ENCODE measurements at regions of chr13 and their contacts with region 1.

Region 1: GRCh38 chr13:29384466-29384865 is 211.0 kb downstream of the SLC7A1 start:
- DNase-seq: no peak

Region 2: DNA sequence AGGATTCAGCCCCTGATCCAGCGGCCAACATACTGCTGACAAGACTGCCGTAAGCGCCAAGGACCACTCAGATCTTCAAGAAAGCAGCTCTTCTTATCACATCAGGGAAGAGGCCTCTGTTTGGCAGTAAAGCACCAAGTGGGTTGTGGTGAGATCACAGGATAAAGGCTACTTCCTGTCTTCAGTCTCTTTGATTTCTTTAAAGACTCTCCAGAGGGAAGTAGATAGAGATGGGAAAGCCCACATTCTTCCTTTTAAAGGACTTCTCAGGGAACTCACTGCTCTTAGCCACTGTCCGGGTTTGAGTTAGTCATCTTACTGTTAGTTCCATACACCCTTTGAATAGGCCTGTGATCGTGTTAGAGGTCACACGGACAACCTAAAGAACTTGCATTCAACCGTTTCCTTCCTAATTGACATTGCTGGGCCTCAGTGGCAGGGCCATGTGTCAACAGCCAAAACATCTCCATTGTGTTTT is 772.8 kb before region 1 on chr13:
- intact Hi-C with region 1: no loop called
- DNase-seq: no peak

Region 3: DNA sequence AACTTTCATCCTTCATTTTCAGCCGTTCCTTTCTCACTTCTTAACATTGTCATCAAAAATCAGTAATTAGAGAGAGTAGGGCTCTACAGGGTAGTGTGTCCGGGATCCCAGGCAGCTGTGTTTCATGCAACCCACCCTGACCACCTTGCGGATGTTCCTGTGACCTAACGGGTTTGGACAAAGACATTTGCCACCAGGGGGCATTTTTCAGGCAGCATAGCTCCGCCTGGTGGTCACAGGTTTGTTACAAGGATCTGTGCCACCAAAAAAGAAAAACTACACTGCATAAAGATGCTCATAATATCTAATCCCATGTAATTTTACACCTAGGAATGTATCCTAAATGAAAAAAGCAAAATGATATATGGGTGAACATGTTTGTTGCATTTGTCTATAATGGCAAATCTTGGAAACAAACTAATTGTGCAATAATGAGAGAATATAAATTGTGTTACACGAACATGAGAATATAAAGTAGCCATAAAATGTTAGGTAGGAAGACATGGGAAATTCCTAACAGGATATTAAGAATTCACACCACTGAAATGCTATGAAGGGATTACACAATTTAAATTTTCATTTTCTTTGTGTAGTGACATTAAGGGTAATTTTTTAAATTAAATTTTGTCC is 88.0 kb after region 1 on chr13:
- intact Hi-C with region 1: loop called (anchors 10 kb)
- DNase-seq: no peak

Measured in cardiac septum (tissue), 1 donor.